ENCODE measurements at regions of chr16 and their contacts with region 1.

Region 1: DNA sequence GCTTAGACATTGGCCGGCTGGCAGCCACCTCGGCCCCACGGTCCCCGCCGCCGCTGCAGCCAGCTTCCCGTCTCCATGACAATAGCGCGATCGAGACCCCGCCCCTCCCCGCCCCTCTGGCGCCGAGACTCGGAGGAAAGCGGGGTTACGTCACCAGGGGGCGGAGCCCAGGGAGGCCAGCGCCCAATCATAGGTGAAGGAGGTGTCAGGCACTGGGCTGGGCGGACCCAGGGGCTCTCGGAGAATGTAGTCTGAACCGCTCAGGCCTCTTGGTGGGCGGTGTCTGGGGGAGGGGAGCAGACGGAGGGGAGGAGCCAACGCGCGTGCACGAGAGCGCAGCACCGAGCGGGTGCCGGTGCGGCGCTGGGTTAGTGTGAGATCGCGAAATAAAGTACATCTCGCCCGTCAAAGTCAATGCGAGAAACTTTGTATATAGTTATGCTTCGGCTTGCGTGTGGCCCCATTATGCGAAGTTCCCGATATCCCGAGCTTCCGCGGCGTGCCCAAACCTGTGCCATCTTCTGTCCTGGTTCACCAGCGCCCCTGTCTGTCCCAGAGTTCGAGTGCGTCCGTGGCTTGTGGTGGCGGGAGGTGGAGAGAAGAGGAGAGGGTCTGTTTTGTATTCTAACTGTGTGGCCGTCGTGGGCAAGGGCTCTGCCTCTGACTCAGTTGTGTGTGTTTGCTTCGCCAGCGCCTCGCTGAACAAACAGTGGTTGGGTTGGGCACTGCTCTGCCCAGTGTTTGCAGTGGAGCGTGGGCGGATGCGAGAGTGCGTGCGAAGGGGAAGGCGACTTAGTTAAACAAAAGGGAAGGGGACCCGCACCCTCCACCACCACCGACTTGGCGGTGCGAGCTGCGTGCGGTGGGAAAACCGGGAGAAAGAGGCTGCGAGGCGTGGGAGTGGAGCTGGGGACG is 1.3 kb upstream of the IRX5 start:
- DNase-seq: peak; percentile 100
- ATAC-seq: peak; percentile 97
- H3K4me3 ChIP-seq: peak overlapping the region; percentile 52 to 72
- H3K27ac ChIP-seq: peak overlapping the region; percentile 3 to 94
- H3K4me1 ChIP-seq: no peaks in the 10 kb centered on the region
- H3K27me3 ChIP-seq: no peaks in the 10 kb centered on the region

Region 2: GRCh38 chr16:53892155-53892554 is 1037.2 kb before region 1 on chr16:
- intact Hi-C with region 1: loop called in 1 of 2 experiments (anchors 10 kb)
- DNase-seq: no peak
- ATAC-seq: peak; percentile 67
- H3K4me3 ChIP-seq: no peak overlapping the region
- H3K27ac ChIP-seq: no peak overlapping the region
- H3K4me1 ChIP-seq: no peaks in the 10 kb centered on the region
- H3K27me3 ChIP-seq: no peaks in the 10 kb centered on the region

Region 3: GRCh38 chr16:54633943-54634362 is 295.4 kb before region 1 on chr16:
- intact Hi-C with region 1: loop called (anchors 2 kb)
- DNase-seq: peak; percentile 68 to 79
- ATAC-seq: peak; percentile 85
- H3K4me3 ChIP-seq: no peak overlapping the region
- H3K27ac ChIP-seq: peak overlapping the region in 1 of 2 donors; percentile 17
- H3K4me1 ChIP-seq: peaks cover 0 to 3% of the 10 kb centered on the region in 2 donors
- H3K27me3 ChIP-seq: no peaks in the 10 kb centered on the region

Region 4: GRCh38 chr16:54812229-54812628 is 117.1 kb before region 1 on chr16:
- intact Hi-C with region 1: loop called in 1 of 2 experiments (anchors 5 kb)
- DNase-seq: no peak
- ATAC-seq: no peak
- H3K4me3 ChIP-seq: no peak overlapping the region
- H3K27ac ChIP-seq: no peak overlapping the region
- H3K4me1 ChIP-seq: peaks cover 5% of the 10 kb centered on the region in 2 donors
- H3K27me3 ChIP-seq: no peaks in the 10 kb centered on the region

Region 5: DNA sequence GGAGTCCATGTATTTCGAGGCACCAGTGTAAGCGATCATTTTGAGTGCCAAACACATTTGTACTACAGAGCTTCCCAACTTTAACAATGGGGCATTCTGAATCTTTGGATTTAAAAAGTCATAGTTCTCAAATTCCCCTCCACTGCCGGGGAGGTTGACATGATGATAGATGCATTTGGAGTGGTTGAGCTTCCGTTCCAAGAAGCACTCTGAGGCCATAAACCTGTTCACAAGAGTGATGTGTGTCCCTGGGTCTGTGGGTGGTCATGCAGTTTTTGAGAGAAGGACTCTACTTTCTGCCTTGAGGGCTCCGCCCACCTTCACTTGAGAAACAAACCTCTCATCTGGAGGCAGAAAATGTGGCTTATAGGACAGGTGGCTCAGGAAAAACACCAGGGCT is 45.0 kb after region 1 on chr16:
- intact Hi-C with region 1: no loop called
- DNase-seq: no peak
- ATAC-seq: no peak
- H3K4me3 ChIP-seq: no peak overlapping the region
- H3K27ac ChIP-seq: no peak overlapping the region
- H3K4me1 ChIP-seq: no peaks in the 10 kb centered on the region
- H3K27me3 ChIP-seq: peaks cover 0 to 2% of the 10 kb centered on the region in 2 donors

Region 6: DNA sequence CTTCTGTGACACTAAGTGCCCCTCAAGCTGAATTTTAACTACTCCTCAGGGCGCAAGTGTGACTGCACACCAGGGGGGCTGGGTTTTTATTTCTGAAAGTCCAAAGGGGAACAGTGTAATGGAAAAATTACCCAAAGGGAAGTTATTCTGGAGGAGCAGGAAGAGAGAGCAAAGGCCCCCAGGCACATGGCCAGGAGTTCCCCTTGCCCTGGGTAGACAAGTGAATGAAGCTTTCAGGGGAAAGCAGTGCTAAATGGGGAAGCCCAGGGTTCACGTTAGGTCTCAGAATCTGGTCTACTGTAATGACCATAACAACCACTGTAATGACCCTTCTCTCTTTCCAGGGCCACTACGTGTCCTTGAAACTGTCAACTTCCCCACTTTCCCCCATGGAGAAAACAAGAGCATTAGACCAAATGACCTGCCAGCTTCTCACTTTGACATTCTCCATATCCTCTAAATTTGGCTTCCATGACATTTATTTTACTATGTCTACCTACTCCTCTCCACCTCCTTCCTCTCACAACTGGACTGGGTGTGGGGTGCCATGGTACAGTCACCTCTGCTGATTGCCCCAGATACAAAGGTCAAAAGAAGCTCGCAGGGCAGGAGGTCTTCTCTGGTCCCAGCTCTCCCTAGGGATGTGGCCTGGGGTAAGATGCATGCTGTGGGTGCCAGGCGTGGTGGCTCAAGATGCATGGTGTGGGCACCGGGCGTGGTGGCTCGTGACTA is 515.6 kb after region 1 on chr16:
- intact Hi-C with region 1: no loop called
- DNase-seq: peak in 1 of 2 donors; percentile 86
- ATAC-seq: peak; percentile 60
- H3K4me3 ChIP-seq: no peak overlapping the region
- H3K27ac ChIP-seq: no peak overlapping the region
- H3K4me1 ChIP-seq: no peaks in the 10 kb centered on the region
- H3K27me3 ChIP-seq: no peaks in the 10 kb centered on the region

Region 7: GRCh38 chr16:56191156-56191815 is 1261.9 kb after region 1 on chr16 and contains the start of gene GNAO1:
- intact Hi-C with region 1: loop called in 1 of 2 experiments (anchors 10 kb)
- DNase-seq: peak; percentile 75 to 91
- ATAC-seq: peak; percentile 87
- H3K4me3 ChIP-seq: peak within 1 kb of the TSS; percentile 62 to 92
- H3K27ac ChIP-seq: peak within 1 kb of the TSS; percentile 69 to 96
- H3K4me1 ChIP-seq: no peaks in the 10 kb centered on the region
- H3K27me3 ChIP-seq: no peaks in the 10 kb centered on the region
- total RNA-seq, gene GNAO1: 6.9 to 16.2 TPM

Measured in aorta (tissue), 5 donors.